ENCODE measurements at regions of chr2 and their contacts with region 1.

Region 1: GRCh38 chr2:46062637-46063412 is 234.4 kb upstream of the EPAS1 start:
- DNase-seq: peak; percentile 78 to 89 (median 84)
- H3K4me3 ChIP-seq: no peak overlapping the region
- H3K27ac ChIP-seq: no peak overlapping the region
- H3K4me1 ChIP-seq: no peaks in the 10 kb centered on the region
- H3K27me3 ChIP-seq: no peaks in the 10 kb centered on the region

Region 2: DNA sequence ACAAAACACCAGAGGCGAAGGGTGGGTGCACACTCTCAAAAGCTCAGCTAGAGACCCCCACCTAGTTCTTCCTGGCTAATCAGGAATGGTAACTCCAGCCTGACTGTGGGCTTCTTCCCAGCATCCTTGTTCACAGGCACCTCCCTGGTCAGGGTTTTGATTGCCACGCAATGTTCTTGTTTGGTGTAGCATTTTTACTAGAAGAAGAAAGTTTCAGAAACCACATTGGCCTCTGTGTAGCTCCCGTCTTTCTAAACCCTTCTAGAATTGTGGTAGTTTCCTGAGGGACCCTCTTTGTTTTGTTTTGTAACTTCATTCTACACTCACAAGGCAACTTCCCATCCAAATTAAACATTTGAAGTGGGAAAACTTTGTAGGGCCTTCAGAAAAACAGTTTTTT is 20.1 kb before region 1 on chr2:
- CTCF ChIA-PET with region 1: no interaction called
- POLR2A ChIA-PET with region 1: no interaction called
- DNase-seq: no peak
- H3K4me3 ChIP-seq: no peak overlapping the region
- H3K27ac ChIP-seq: no peak overlapping the region
- H3K4me1 ChIP-seq: no peaks in the 10 kb centered on the region
- H3K27me3 ChIP-seq: no peaks in the 10 kb centered on the region

Region 3: DNA sequence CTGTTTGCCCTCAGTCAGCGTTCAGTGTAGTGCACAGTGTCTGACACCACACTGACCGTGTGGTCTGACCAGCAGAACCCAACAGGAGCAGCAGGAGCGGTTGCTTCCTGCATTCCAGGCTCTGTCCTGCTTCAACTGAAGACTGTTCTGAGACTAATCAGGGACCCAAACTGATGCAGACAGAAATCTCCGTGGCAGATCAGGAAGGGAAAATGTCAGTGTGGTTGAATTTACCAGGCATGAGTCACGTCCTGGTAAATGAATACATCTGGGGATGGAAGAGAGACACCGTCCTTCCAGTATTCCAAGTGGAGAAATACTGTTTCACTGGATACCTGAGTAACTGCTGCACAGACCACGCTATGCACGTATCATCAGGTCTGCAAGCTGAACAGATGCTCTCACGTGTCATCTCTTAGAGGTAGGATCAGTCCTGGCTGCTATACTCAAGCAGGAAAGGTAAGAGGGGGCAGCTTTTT is 10.8 kb after region 1 on chr2:
- CTCF ChIA-PET with region 1: interaction called, 22 read pairs
- POLR2A ChIA-PET with region 1: no interaction called
- DNase-seq: no peak
- H3K4me3 ChIP-seq: no peak overlapping the region
- H3K27ac ChIP-seq: no peak overlapping the region
- H3K4me1 ChIP-seq: peaks cover 0 to 6% (median 0%) of the 10 kb centered on the region in 4 experiments
- H3K27me3 ChIP-seq: no peaks in the 10 kb centered on the region

Region 4: GRCh38 chr2:46377176-46377581 is 314.4 kb after region 1 on chr2:
- CTCF ChIA-PET with region 1: interaction called, 12 read pairs
- POLR2A ChIA-PET with region 1: no interaction called
- DNase-seq: no peak
- H3K4me3 ChIP-seq: no peak overlapping the region
- H3K27ac ChIP-seq: no peak overlapping the region
- H3K4me1 ChIP-seq: peaks cover 0 to 5% (median 0%) of the 10 kb centered on the region in 4 experiments
- H3K27me3 ChIP-seq: no peaks in the 10 kb centered on the region

Measured in common myeloid progenitor, CD34-positive (primary cell).